ENCODE measurements at regions of chr18 and their contacts with region 1.

Region 1: GRCh38 chr18:63155169-63155852 is 164.3 kb downstream of the BCL2 start:
- DNase-seq: peak; percentile 60 to 82
- ATAC-seq: peak; percentile 86 to 92 (median 89)
- H3K4me3 ChIP-seq: peak overlapping the region; percentile 54
- H3K27ac ChIP-seq: peak overlapping the region; percentile 82
- H3K4me1 ChIP-seq: peaks cover 35% of the 10 kb centered on the region
- H3K27me3 ChIP-seq: no peaks in the 10 kb centered on the region
- CTCF ChIP-seq: peak; percentile 76

Region 2: GRCh38 chr18:63016270-63016669 is 139.0 kb before region 1 on chr18:
- intact Hi-C with region 1: loop called in 1 of 2 experiments (anchors 5 kb)
- DNase-seq: no peak
- ATAC-seq: peak; percentile 51 to 83 (median 70)
- H3K4me3 ChIP-seq: no peak overlapping the region
- H3K27ac ChIP-seq: no peak overlapping the region
- H3K4me1 ChIP-seq: no peaks in the 10 kb centered on the region
- H3K27me3 ChIP-seq: no peaks in the 10 kb centered on the region
- CTCF ChIP-seq: peak; percentile 88

Region 3: GRCh38 chr18:63105636-63106316 is 49.5 kb before region 1 on chr18:
- intact Hi-C with region 1: loop called in 1 of 2 experiments (anchors 5 kb)
- DNase-seq: no peak
- ATAC-seq: peak; percentile 23 to 63 (median 46)
- H3K4me3 ChIP-seq: no peak overlapping the region
- H3K27ac ChIP-seq: no peak overlapping the region
- H3K4me1 ChIP-seq: peaks cover 4% of the 10 kb centered on the region
- H3K27me3 ChIP-seq: no peaks in the 10 kb centered on the region
- CTCF ChIP-seq: no peak

Region 4: GRCh38 chr18:63119647-63120046 is 35.7 kb before region 1 on chr18:
- intact Hi-C with region 1: loop called in 1 of 2 experiments (anchors 5 kb)
- DNase-seq: peak in 1 of 2 donors; percentile 64
- ATAC-seq: peak; percentile 68 to 89 (median 73)
- H3K4me3 ChIP-seq: no peak overlapping the region
- H3K27ac ChIP-seq: peak overlapping the region; percentile 74
- H3K4me1 ChIP-seq: peaks cover 32% of the 10 kb centered on the region
- H3K27me3 ChIP-seq: no peaks in the 10 kb centered on the region
- CTCF ChIP-seq: peak; percentile 65

Region 5: GRCh38 chr18:63192885-63193349 is 37.6 kb after region 1 on chr18:
- intact Hi-C with region 1: loop called in 1 of 2 experiments (anchors 5 kb)
- DNase-seq: no peak
- ATAC-seq: peak; percentile 84 to 96 (median 93)
- H3K4me3 ChIP-seq: no peak overlapping the region
- H3K27ac ChIP-seq: peak overlapping the region; percentile 87
- H3K4me1 ChIP-seq: peaks cover 67% of the 10 kb centered on the region
- H3K27me3 ChIP-seq: no peaks in the 10 kb centered on the region
- CTCF ChIP-seq: no peak

Region 6: DNA sequence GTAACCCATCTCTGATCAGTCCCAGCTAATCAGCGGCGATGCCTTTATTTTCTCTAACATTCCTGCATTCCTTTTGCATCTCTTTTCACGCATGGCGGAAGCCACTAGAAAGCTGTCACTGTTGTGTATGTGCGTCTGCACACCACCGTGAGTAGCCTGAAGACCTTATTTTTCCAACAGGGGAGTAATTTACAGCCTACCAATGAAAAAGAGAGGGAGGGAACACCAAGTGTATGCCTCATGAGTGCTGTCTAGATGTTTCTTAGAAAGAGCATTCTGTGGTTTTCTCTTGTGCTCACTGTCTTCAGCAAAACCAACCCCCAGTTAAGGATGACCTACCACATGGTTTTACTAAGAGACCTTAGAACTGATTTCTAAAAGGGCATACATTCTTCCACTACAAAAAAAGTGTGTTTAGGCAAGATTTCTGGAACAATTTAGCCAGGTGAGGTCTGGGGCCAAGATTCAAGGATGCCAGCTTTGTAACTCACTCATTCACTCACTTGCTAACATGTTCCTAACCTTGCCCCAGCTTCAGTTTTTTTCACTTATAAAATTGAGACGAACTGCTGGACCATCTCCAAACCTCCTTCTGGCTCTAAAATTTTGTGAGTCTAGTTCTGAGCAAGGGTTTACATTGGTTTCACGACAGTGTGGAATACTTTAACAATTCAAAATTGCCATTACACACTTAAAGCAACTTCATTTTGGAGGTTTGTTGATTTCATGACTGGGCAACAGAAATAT is 112.8 kb after region 1 on chr18:
- intact Hi-C with region 1: loop called in 1 of 2 experiments (anchors 5 kb)
- DNase-seq: no peak
- ATAC-seq: no peak
- H3K4me3 ChIP-seq: no peak overlapping the region
- H3K27ac ChIP-seq: no peak overlapping the region
- H3K4me1 ChIP-seq: peaks cover 37% of the 10 kb centered on the region
- H3K27me3 ChIP-seq: no peaks in the 10 kb centered on the region
- CTCF ChIP-seq: no peak

Region 7: DNA sequence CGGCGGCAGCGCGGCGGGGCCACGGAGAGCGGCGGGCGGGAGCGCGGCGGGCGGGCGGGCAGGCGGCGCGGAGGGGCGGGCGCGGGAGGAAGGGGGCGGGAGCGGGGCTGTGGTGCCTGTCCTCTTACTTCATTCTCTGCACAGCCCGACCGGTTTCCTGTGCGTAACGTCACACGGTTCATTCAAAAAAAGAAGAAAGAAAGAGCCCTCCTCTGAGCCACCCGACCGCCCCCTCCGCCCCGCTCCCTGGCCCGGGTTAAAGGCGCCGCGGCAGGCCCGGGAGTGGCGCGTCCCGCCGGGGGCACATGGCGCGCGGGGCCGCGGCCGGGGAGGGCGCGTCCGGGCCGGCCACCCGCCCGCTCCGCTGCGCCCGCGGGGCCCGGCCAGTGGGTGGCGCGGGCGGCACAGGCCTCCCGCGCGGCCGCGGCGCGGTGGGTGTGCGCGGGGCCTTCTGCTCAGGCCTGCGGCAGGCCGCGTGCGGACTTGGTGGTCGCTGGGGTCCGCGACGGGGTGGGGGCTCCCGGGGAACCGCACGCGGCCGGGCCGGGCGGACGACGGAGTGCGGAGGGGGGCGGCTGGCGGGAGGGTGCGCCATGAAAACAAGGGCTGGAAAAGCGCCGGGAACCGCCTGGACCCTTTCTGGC is 164.9 kb after region 1 on chr18:
- intact Hi-C with region 1: loop called in 1 of 2 experiments (anchors 5 kb)
- DNase-seq: peak; percentile 82 to 90
- ATAC-seq: peak; percentile 72 to 82 (median 74)
- H3K4me3 ChIP-seq: peak overlapping the region; percentile 71
- H3K27ac ChIP-seq: peak overlapping the region; percentile 87
- H3K4me1 ChIP-seq: peaks cover 29% of the 10 kb centered on the region
- H3K27me3 ChIP-seq: no peaks in the 10 kb centered on the region
- CTCF ChIP-seq: peak; percentile 29

Region 8: GRCh38 chr18:63410792-63411191 is 255.5 kb after region 1 on chr18:
- intact Hi-C with region 1: no loop called
- DNase-seq: no peak
- ATAC-seq: no peak
- H3K4me3 ChIP-seq: no peak overlapping the region
- H3K27ac ChIP-seq: no peak overlapping the region
- H3K4me1 ChIP-seq: no peaks in the 10 kb centered on the region
- H3K27me3 ChIP-seq: no peaks in the 10 kb centered on the region
- CTCF ChIP-seq: no peak

Measured in psoas muscle (tissue), 8 donors.